B cell (primary cell): ENCODE measurements at regions of chr3 and their contacts with region 1.

Region 1: GRCh38 chr3:50611464-50612233 is at the start of gene CISH:
- DNase-seq: peak; percentile 92
- ATAC-seq: peak; percentile 76
- H3K4me3 ChIP-seq: peak within 1 kb of the TSS; percentile 30 to 86 (median 76)
- H3K4me3 Mint-ChIP-seq: peak within 1 kb of the TSS; percentile 90
- H3K27ac ChIP-seq: peak within 1 kb of the TSS; percentile 11 to 65
- H3K27ac Mint-ChIP-seq: peak within 1 kb of the TSS; percentile 80
- H3K4me1 ChIP-seq: peaks cover 24 to 37% of the 10 kb centered on the region in 2 donors
- H3K4me1 Mint-ChIP-seq: peaks cover 42% of the 10 kb centered on the region
- H3K27me3 ChIP-seq: no peaks in the 10 kb centered on the region
- H3K27me3 Mint-ChIP-seq: no peaks in the 10 kb centered on the region
- CTCF ChIP-seq: peak; percentile 61
- total RNA-seq, gene CISH: 2.3 and 2.4 TPM in 2 replicates

Region 2: DNA sequence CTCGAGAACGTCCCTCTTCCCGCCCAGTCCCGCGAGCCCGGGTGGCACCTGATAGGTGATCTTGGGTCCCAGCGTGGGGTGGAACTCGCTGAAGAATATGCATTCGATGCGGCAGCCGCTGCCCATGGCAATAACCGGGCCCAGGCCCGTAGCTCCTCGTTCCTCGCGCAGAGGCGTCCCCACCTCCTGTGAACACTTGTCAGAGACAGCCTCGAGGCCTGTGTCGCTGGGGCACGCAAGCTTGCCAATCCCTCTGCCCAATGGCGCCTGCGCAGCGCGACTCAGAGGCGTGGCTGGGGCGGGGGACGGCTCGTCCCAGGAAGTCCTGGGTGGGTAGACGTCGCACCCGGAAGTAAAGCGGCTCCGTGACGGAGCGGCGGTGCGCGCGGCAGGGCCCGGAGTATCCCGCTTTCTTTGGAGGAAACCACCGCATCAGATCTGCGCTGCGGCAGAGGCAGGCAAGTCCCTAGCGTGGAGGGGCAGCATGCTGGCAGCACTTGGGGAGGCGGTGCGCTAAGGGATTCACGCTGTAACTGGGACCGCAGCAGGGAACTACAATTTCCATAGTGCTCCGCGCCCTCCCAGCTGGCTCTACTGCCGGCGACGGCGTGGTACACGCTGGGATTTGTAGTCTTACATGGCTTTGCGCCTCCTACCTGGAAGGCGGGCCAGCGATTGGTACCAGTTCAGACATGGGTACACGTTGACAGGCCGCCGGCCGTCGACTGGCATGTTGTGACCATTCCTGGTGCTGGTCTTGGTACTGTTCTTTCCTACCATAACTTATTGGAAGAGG is 260.9 kb before region 1 on chr3 and contains the starts of genes CYB561D2 and NPRL2:
- CTCF ChIA-PET with region 1: interaction called, 3 read pairs
- POLR2A ChIA-PET with region 1: no interaction called
- intact Hi-C with region 1: loop called (anchors 5 kb)
- DNase-seq: peak; percentile 98
- ATAC-seq: peak; percentile 87
- H3K4me3 ChIP-seq: peak within 1 kb of the TSS; percentile 71 to 98 (median 91)
- H3K4me3 Mint-ChIP-seq: peak within 1 kb of the TSS; percentile 99
- H3K27ac ChIP-seq: peak within 1 kb of the TSS; percentile 85 to 93
- H3K27ac Mint-ChIP-seq: peak within 1 kb of the TSS; percentile 100
- H3K4me1 ChIP-seq: peaks cover 25 to 41% of the 10 kb centered on the region in 2 donors
- H3K4me1 Mint-ChIP-seq: peaks cover 52% of the 10 kb centered on the region
- H3K27me3 ChIP-seq: no peaks in the 10 kb centered on the region
- H3K27me3 Mint-ChIP-seq: no peaks in the 10 kb centered on the region
- CTCF ChIP-seq: no peak
- total RNA-seq, gene CYB561D2: 36.1 and 39.5 TPM in 2 replicates
- total RNA-seq, gene NPRL2: 29.6 and 31.3 TPM in 2 replicates

Region 3: GRCh38 chr3:50445919-50446318 is 165.7 kb before region 1 on chr3:
- CTCF ChIA-PET with region 1: no interaction called
- POLR2A ChIA-PET with region 1: no interaction called
- intact Hi-C with region 1: no loop called
- DNase-seq: no peak
- ATAC-seq: no peak
- H3K4me3 ChIP-seq: no peak overlapping the region
- H3K4me3 Mint-ChIP-seq: no peak overlapping the region
- H3K27ac ChIP-seq: no peak overlapping the region
- H3K27ac Mint-ChIP-seq: no peak overlapping the region
- H3K4me1 ChIP-seq: peaks cover 0 to 3% of the 10 kb centered on the region in 2 donors
- H3K4me1 Mint-ChIP-seq: peaks cover 3% of the 10 kb centered on the region
- H3K27me3 ChIP-seq: no peaks in the 10 kb centered on the region
- H3K27me3 Mint-ChIP-seq: peaks cover 3% of the 10 kb centered on the region
- CTCF ChIP-seq: no peak

Region 4: DNA sequence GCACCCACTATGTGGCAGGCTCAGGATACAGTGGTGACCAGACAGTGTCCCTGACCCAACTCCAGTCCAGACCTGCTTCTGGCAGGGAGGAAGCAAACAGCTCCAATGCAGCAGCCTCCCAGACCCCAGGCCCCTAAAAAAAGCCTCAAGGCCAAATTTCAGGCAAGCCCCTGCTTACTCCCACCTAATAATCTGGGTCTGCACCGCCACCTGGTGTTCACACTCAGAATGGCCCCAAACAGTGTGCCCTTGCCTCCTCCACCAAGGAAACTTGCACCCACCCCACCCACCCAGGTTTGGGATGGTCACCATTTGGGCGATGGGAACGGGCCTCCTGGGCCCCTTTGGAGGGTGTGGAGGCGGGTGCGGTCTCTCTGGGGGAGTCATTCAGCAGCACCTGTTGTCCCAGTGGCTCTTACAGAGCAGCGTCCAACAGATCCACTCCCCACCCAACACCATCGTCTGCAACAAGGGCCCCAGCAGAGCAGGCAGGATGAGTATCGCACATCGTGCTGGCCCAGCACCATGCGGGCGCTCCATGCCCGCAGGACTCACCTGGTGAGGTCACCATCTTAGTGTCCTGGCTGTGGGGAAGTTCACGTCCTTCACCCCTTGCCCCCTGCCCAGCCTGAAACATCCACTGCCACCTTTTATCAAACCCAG is 61.4 kb before region 1 on chr3:
- CTCF ChIA-PET with region 1: interaction called, 14 read pairs
- POLR2A ChIA-PET with region 1: no interaction called
- intact Hi-C with region 1: loop called (anchors 1 kb)
- DNase-seq: peak; percentile 70
- ATAC-seq: peak; percentile 68
- H3K4me3 ChIP-seq: no peak overlapping the region
- H3K4me3 Mint-ChIP-seq: no peak overlapping the region
- H3K27ac ChIP-seq: no peak overlapping the region
- H3K27ac Mint-ChIP-seq: no peak overlapping the region
- H3K4me1 ChIP-seq: no peaks in the 10 kb centered on the region
- H3K4me1 Mint-ChIP-seq: no peaks in the 10 kb centered on the region
- H3K27me3 ChIP-seq: peaks cover 0 to 3% (median 0%) of the 10 kb centered on the region in 4 experiments
- H3K27me3 Mint-ChIP-seq: no peaks in the 10 kb centered on the region
- CTCF ChIP-seq: peak; percentile 84

Region 5: DNA sequence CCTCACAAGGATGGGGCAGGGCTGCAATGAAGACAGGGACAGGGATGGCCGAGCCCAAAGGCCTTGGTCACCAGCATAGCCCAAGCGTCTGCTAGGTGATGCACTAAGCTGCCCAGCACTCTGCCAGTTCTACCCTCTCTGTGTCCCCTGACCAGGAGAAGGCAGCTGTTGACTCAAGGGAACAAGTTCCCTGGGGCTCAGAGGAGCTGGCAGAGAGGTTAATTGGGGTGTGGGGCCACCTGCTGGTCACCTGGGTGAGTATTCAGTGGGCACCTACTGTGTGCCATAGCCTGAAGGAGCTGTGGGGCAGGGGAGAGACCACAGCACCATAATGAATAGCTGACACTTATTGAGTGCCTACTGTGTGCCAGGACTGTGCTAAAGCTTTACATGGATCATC is 41.1 kb after region 1 on chr3:
- CTCF ChIA-PET with region 1: interaction called, 224 read pairs
- POLR2A ChIA-PET with region 1: interaction called, 4 read pairs
- intact Hi-C with region 1: no loop called
- DNase-seq: peak; percentile 56
- ATAC-seq: peak; percentile 68
- H3K4me3 ChIP-seq: no peak overlapping the region
- H3K4me3 Mint-ChIP-seq: no peak overlapping the region
- H3K27ac ChIP-seq: no peak overlapping the region
- H3K27ac Mint-ChIP-seq: no peak overlapping the region
- H3K4me1 ChIP-seq: no peaks in the 10 kb centered on the region
- H3K4me1 Mint-ChIP-seq: no peaks in the 10 kb centered on the region
- H3K27me3 ChIP-seq: no peaks in the 10 kb centered on the region
- H3K27me3 Mint-ChIP-seq: no peaks in the 10 kb centered on the region
- CTCF ChIP-seq: peak; percentile 27

Region 6: GRCh38 chr3:51379301-51379700 is 767.7 kb after region 1 on chr3:
- CTCF ChIA-PET with region 1: interaction called, 67 read pairs
- POLR2A ChIA-PET with region 1: no interaction called
- intact Hi-C with region 1: no loop called
- DNase-seq: no peak
- ATAC-seq: no peak
- H3K4me3 ChIP-seq: no peak overlapping the region
- H3K4me3 Mint-ChIP-seq: no peak overlapping the region
- H3K27ac ChIP-seq: no peak overlapping the region
- H3K27ac Mint-ChIP-seq: no peak overlapping the region
- H3K4me1 ChIP-seq: peaks cover 9% of the 10 kb centered on the region in 2 donors
- H3K4me1 Mint-ChIP-seq: peaks cover 5% of the 10 kb centered on the region
- H3K27me3 ChIP-seq: peaks cover 0 to 24% (median 4%) of the 10 kb centered on the region in 4 experiments
- H3K27me3 Mint-ChIP-seq: peaks cover 26% of the 10 kb centered on the region
- CTCF ChIP-seq: no peak

Region 7: DNA sequence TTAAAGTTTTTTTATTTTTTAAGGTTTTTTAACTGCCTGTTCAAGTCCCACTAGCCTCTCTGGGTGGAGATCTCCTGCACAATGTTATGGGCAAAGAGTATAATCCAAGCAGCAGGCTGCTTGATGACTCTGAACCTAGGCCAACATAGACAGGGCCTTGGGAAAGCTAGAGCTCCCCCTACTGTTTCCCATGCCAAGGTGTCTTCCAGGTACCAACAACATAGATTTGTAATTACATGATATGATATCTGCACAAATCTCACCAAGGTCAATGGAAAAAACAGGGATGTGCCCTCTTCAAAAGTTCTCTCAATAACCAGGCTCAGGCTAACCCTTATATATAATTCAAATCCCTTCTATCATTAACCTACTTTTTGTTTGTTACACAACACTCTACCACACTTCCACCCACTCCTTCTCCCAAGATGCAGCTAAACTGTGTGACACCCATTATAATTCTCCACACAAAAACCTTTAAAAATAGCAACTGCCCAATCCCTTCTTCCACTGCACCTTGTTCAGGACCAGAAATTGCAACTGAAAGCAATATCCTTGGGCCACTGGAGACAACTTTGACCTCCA is 823.2 kb after region 1 on chr3:
- CTCF ChIA-PET with region 1: interaction called, 18 read pairs
- POLR2A ChIA-PET with region 1: interaction called, 4 read pairs
- intact Hi-C with region 1: no loop called
- DNase-seq: peak; percentile 54
- ATAC-seq: peak; percentile 56
- H3K4me3 ChIP-seq: no peak overlapping the region
- H3K4me3 Mint-ChIP-seq: no peak overlapping the region
- H3K27ac ChIP-seq: no peak overlapping the region
- H3K27ac Mint-ChIP-seq: no peak overlapping the region
- H3K4me1 ChIP-seq: no peaks in the 10 kb centered on the region
- H3K4me1 Mint-ChIP-seq: no peaks in the 10 kb centered on the region
- H3K27me3 ChIP-seq: no peaks in the 10 kb centered on the region
- H3K27me3 Mint-ChIP-seq: no peaks in the 10 kb centered on the region
- CTCF ChIP-seq: peak; percentile 72

Region 8: GRCh38 chr3:51799879-51800749 is 1188.5 kb after region 1 on chr3:
- CTCF ChIA-PET with region 1: interaction called, 6 read pairs
- POLR2A ChIA-PET with region 1: no interaction called
- intact Hi-C with region 1: loop called (anchors 10 kb)
- DNase-seq: peak; percentile 62
- ATAC-seq: no peak
- H3K4me3 ChIP-seq: no peak overlapping the region
- H3K4me3 Mint-ChIP-seq: no peak overlapping the region
- H3K27ac ChIP-seq: no peak overlapping the region
- H3K27ac Mint-ChIP-seq: no peak overlapping the region
- H3K4me1 ChIP-seq: no peaks in the 10 kb centered on the region
- H3K4me1 Mint-ChIP-seq: no peaks in the 10 kb centered on the region
- H3K27me3 ChIP-seq: peaks cover 0 to 11% (median 5%) of the 10 kb centered on the region in 4 experiments
- H3K27me3 Mint-ChIP-seq: peaks cover 32% of the 10 kb centered on the region
- CTCF ChIP-seq: peak; percentile 91